CD8-positive, alpha-beta memory T cell (primary cell): ENCODE measurements at regions of chr20 and their contacts with region 1.

Region 1: GRCh38 chr20:8043687-8044282 is 24.2 kb upstream of the TMX4 start:
- DNase-seq: peak in 2 of 5 donors; percentile 53 to 61
- H3K4me3 ChIP-seq: no peak overlapping the region
- H3K4me3 Mint-ChIP-seq: no peak overlapping the region
- H3K27ac ChIP-seq: no peak overlapping the region
- H3K27ac Mint-ChIP-seq: no peak overlapping the region
- H3K4me1 ChIP-seq: no peaks in the 10 kb centered on the region
- H3K4me1 Mint-ChIP-seq: peaks cover 2 to 5% (median 3%) of the 10 kb centered on the region in 3 donors
- H3K27me3 ChIP-seq: peaks cover 4% of the 10 kb centered on the region
- H3K27me3 Mint-ChIP-seq: peaks cover 6 to 25% of the 10 kb centered on the region in 2 donors

Region 2: GRCh38 chr20:7879883-7880282 is 163.9 kb before region 1 on chr20:
- CTCF ChIA-PET with region 1: no interaction called
- POLR2A ChIA-PET with region 1: no interaction called
- DNase-seq: no peak
- H3K4me3 ChIP-seq: no peak overlapping the region
- H3K4me3 Mint-ChIP-seq: no peak overlapping the region
- H3K27ac ChIP-seq: no peak overlapping the region
- H3K27ac Mint-ChIP-seq: peak overlapping the region in 1 of 8 donors; percentile 24
- H3K4me1 ChIP-seq: no peaks in the 10 kb centered on the region
- H3K4me1 Mint-ChIP-seq: peaks cover 0 to 6% (median 3%) of the 10 kb centered on the region in 3 donors
- H3K27me3 ChIP-seq: no peaks in the 10 kb centered on the region
- H3K27me3 Mint-ChIP-seq: no peaks in the 10 kb centered on the region

Region 3: DNA sequence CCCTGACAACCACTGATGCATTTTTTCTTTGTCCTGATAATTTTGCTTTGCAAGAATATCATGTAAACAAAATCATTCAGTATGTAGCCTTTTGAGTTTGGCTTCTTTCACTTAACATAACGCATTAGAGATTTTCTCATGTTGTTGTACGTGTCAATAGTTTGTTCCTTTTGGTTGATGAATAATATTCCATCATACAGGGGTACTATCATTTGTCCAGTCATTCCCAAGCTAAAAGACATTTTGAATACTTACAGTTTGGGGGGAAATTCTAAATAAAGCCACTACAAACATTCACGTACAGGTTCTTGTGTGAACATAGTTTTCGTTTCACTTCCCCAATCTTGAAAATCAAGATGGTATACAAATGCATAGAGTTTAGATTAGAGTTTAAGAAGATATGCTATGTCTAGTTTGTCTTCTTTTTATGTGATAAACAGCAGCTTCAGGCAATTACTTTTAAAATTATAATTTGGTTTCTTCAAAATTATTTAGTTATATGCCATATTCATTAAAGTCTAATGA is 108.7 kb before region 1 on chr20:
- CTCF ChIA-PET with region 1: interaction called, 10 read pairs
- POLR2A ChIA-PET with region 1: no interaction called
- DNase-seq: no peak
- H3K4me3 ChIP-seq: no peak overlapping the region
- H3K4me3 Mint-ChIP-seq: no peak overlapping the region
- H3K27ac ChIP-seq: no peak overlapping the region
- H3K27ac Mint-ChIP-seq: no peak overlapping the region
- H3K4me1 ChIP-seq: no peaks in the 10 kb centered on the region
- H3K4me1 Mint-ChIP-seq: peaks cover 0 to 5% (median 0%) of the 10 kb centered on the region in 3 donors
- H3K27me3 ChIP-seq: no peaks in the 10 kb centered on the region
- H3K27me3 Mint-ChIP-seq: peaks cover 0 to 45% of the 10 kb centered on the region in 2 donors

Region 4: DNA sequence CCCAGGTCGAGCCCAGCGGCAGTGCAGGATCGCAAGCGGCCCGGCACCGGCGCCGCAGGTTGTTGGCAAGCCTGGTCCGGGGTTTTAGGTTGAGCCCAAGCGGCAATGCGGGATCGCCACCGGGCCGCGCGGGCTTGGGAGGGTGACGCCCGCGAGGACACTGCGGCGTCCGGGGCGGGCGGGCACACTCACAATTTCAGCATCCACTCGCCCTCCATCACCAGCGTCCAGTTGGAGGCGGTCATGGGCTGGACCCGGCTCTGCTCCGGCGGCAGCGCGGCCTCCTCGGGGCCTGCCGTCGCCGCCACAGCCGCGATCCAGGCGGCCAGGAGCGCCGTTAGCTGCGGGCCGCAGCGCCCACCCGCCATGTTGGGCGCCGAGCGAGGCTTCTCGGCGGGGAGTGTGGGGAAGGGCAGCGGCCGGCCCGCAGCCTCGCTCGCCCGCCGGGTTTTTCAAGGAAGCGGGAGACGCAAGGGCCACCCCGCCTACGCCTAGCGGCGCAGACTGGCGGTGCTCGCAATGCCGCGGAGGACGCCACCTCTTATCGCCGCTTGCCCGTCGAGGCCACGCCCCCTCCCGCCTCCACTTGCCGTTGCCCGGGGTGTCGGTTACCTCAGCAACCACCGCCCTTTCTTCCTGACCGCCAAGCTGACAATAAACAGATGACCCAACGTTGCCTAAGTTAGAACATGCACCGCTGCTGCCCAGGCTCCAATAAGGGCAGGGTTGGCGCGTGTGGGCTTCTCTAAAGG is 24.4 kb before region 1 on chr20 and contains the start of gene TMX4:
- CTCF ChIA-PET with region 1: interaction called, 15 read pairs
- POLR2A ChIA-PET with region 1: no interaction called
- DNase-seq: peak; percentile 79 to 95 (median 88)
- H3K4me3 ChIP-seq: peak within 1 kb of the TSS; percentile 71
- H3K4me3 Mint-ChIP-seq: peak within 1 kb of the TSS; percentile 90 to 98 (median 94)
- H3K27ac ChIP-seq: peak within 1 kb of the TSS; percentile 88
- H3K27ac Mint-ChIP-seq: peak within 1 kb of the TSS; percentile 80 to 96 (median 94)
- H3K4me1 ChIP-seq: peaks cover 32% of the 10 kb centered on the region
- H3K4me1 Mint-ChIP-seq: peaks cover 39 to 44% (median 41%) of the 10 kb centered on the region in 3 donors
- H3K27me3 ChIP-seq: no peaks in the 10 kb centered on the region
- H3K27me3 Mint-ChIP-seq: no peaks in the 10 kb centered on the region
- total RNA-seq, gene TMX4: 36.7 to 39.2 TPM

Region 5: DNA sequence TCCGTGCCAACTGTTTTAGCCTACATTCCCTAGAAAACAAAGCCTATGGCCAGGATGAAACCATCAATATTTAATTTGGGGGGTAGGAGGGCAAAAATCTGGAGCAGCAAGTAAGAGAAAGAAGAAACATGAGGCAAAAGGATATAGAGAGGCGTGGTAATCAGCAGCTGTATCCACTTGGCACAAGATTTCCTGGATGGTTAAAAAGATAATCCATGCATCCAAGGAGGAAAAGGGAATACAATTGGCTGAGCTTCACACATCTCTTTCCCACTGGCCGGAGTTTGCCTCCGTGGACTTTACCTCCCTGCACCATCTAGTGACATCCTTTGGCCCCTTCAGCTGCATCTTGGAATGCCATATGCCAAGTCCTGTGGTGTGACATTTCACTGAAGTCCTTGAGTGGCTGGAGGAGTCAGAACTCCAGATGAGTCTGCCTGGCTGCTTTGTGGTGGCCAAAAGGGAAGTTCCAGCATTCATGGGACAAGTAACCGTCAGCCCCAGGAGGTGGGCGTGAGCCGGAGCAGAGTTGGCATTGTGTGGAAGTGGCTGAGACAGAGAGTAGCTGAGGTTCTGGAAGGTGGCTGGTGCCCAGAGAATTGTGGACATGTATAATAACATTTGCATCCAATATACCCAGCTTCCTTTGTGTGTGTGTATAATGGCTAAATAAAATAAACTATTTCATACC is 10.5 kb before region 1 on chr20:
- CTCF ChIA-PET with region 1: interaction called, 16 read pairs
- POLR2A ChIA-PET with region 1: no interaction called
- DNase-seq: no peak
- H3K4me3 ChIP-seq: no peak overlapping the region
- H3K4me3 Mint-ChIP-seq: no peak overlapping the region
- H3K27ac ChIP-seq: no peak overlapping the region
- H3K27ac Mint-ChIP-seq: peak overlapping the region in 1 of 8 donors; percentile 44
- H3K4me1 ChIP-seq: no peaks in the 10 kb centered on the region
- H3K4me1 Mint-ChIP-seq: no peaks in the 10 kb centered on the region
- H3K27me3 ChIP-seq: no peaks in the 10 kb centered on the region
- H3K27me3 Mint-ChIP-seq: peaks cover 0 to 2% of the 10 kb centered on the region in 2 donors

Region 6: GRCh38 chr20:8082025-8082424 is 38.2 kb after region 1 on chr20:
- CTCF ChIA-PET with region 1: no interaction called
- POLR2A ChIA-PET with region 1: no interaction called
- DNase-seq: no peak
- H3K4me3 ChIP-seq: no peak overlapping the region
- H3K4me3 Mint-ChIP-seq: no peak overlapping the region
- H3K27ac ChIP-seq: no peak overlapping the region
- H3K27ac Mint-ChIP-seq: no peak overlapping the region
- H3K4me1 ChIP-seq: no peaks in the 10 kb centered on the region
- H3K4me1 Mint-ChIP-seq: no peaks in the 10 kb centered on the region
- H3K27me3 ChIP-seq: no peaks in the 10 kb centered on the region
- H3K27me3 Mint-ChIP-seq: peaks cover 0 to 1% of the 10 kb centered on the region in 2 donors

Region 7: DNA sequence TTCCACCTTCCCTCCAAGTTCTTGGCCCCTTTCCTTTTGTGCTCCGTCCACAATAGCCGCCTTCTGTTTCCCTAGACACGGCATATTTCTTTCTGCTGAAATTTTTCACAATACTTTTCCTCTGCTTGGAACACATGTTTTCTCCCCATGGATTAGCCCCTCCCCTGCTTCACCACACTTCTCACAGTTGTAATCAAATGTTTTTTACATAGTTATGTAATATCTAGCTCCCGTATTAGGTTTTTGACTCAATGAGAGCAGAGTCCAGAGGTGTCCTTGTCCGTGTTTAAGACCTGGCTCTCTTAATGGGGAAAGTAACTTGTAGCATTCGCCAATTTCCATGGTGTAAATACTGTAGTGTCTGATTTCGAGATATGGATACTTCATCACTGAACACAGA is 122.9 kb after region 1 on chr20:
- CTCF ChIA-PET with region 1: no interaction called
- POLR2A ChIA-PET with region 1: no interaction called
- DNase-seq: no peak
- H3K4me3 ChIP-seq: no peak overlapping the region
- H3K4me3 Mint-ChIP-seq: peak overlapping the region in 1 of 7 donors; percentile 6
- H3K27ac ChIP-seq: no peak overlapping the region
- H3K27ac Mint-ChIP-seq: no peak overlapping the region
- H3K4me1 ChIP-seq: no peaks in the 10 kb centered on the region
- H3K4me1 Mint-ChIP-seq: peaks cover 16 to 22% (median 17%) of the 10 kb centered on the region in 3 donors
- H3K27me3 ChIP-seq: no peaks in the 10 kb centered on the region
- H3K27me3 Mint-ChIP-seq: no peaks in the 10 kb centered on the region

Region 8: GRCh38 chr20:8305449-8305978 is 261.7 kb after region 1 on chr20:
- CTCF ChIA-PET with region 1: interaction called, 12 read pairs
- POLR2A ChIA-PET with region 1: no interaction called
- DNase-seq: peak; percentile 55 to 85 (median 68)
- H3K4me3 ChIP-seq: no peak overlapping the region
- H3K4me3 Mint-ChIP-seq: peak overlapping the region in 2 of 7 donors; percentile 19 to 30
- H3K27ac ChIP-seq: no peak overlapping the region
- H3K27ac Mint-ChIP-seq: peak overlapping the region in 5 of 8 donors; percentile 1 to 62 (median 26)
- H3K4me1 ChIP-seq: peaks cover 8% of the 10 kb centered on the region
- H3K4me1 Mint-ChIP-seq: peaks cover 10 to 12% (median 12%) of the 10 kb centered on the region in 3 donors
- H3K27me3 ChIP-seq: no peaks in the 10 kb centered on the region
- H3K27me3 Mint-ChIP-seq: no peaks in the 10 kb centered on the region

Region 9: GRCh38 chr20:8389381-8390036 is 345.7 kb after region 1 on chr20:
- CTCF ChIA-PET with region 1: interaction called, 31 read pairs
- POLR2A ChIA-PET with region 1: no interaction called
- DNase-seq: peak in 2 of 5 donors; percentile 17 to 18
- H3K4me3 ChIP-seq: no peak overlapping the region
- H3K4me3 Mint-ChIP-seq: no peak overlapping the region
- H3K27ac ChIP-seq: no peak overlapping the region
- H3K27ac Mint-ChIP-seq: peak overlapping the region in 2 of 8 donors; percentile 10 to 22
- H3K4me1 ChIP-seq: no peaks in the 10 kb centered on the region
- H3K4me1 Mint-ChIP-seq: peaks cover 4 to 25% (median 8%) of the 10 kb centered on the region in 3 donors
- H3K27me3 ChIP-seq: no peaks in the 10 kb centered on the region
- H3K27me3 Mint-ChIP-seq: no peaks in the 10 kb centered on the region

Region 10: DNA sequence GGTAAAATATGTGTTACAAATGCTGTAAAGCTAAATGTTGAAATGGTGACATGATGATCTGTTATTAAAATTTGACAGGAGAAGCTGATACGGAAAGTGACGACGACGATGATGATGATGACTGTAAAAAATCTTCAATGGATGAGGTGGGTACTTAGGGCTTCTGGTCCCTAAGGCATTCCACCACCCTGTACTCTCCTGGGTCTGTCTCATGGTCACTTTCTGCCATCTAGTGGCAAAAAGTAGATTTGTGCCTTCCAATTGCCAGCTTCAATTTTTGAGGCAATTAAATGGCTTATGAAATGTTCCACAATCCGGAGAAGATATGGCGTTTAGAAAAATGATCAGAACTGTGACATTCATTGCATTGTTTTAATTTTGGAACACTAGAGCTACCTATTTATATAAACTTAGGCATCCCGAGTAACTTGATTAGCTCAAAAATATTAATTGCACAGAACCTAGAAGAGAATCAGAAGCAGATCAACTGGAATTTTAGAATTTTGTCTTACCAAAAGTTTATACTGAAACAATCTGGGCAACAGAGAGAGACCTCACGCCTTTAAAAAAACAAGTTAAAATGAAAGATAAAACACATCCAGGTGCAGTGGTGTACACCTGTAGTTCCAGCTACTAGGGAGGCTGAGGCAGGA is 678.6 kb after region 1 on chr20:
- CTCF ChIA-PET with region 1: interaction called, 42 read pairs
- POLR2A ChIA-PET with region 1: no interaction called
- DNase-seq: peak in 2 of 5 donors; percentile 11 to 35
- H3K4me3 ChIP-seq: no peak overlapping the region
- H3K4me3 Mint-ChIP-seq: no peak overlapping the region
- H3K27ac ChIP-seq: no peak overlapping the region
- H3K27ac Mint-ChIP-seq: no peak overlapping the region
- H3K4me1 ChIP-seq: no peaks in the 10 kb centered on the region
- H3K4me1 Mint-ChIP-seq: no peaks in the 10 kb centered on the region
- H3K27me3 ChIP-seq: no peaks in the 10 kb centered on the region
- H3K27me3 Mint-ChIP-seq: no peaks in the 10 kb centered on the region